ENCODE measurements at regions of chr6 and their contacts with region 1.

Region 1: DNA sequence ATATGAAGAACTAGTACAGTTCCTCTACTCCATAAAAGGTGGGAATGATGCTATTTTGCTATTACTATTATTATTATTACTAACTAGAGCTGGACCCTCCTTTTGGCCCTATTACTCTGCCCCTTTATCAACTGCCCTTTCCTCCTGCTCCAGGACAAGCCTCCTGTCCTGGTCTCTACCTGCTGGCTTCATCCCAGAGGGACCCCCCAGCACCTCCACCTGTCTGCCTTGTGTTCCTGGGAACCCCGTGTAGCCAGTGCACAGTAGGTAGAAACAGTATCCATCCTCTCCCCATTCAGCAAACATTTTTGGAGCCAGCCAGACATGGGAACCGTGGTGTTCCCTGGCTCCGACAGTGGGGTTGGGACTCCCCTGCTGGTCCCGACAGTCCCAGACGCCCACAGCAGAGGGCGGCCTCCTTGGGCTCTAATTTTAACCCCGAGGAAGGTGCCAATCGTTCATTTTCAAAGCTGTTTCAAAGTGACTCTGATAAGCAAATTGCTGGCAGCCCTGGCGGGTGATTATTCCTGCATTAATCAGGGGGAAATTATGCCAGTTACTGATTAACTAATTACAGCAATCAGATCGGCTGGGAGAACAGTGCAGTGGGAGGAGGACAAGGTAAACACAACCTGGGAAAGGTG is 44.2 kb upstream of the MDGA1 start:
- DNase-seq: no peak
- H3K4me3 ChIP-seq: no peak overlapping the region
- H3K27ac ChIP-seq: no peak overlapping the region
- H3K27me3 ChIP-seq: peaks cover 54% of the 10 kb centered on the region
- CTCF ChIP-seq: 0 out of 2 replicates have a peak, but pooled peaks have one; percentile 6

Region 2: DNA sequence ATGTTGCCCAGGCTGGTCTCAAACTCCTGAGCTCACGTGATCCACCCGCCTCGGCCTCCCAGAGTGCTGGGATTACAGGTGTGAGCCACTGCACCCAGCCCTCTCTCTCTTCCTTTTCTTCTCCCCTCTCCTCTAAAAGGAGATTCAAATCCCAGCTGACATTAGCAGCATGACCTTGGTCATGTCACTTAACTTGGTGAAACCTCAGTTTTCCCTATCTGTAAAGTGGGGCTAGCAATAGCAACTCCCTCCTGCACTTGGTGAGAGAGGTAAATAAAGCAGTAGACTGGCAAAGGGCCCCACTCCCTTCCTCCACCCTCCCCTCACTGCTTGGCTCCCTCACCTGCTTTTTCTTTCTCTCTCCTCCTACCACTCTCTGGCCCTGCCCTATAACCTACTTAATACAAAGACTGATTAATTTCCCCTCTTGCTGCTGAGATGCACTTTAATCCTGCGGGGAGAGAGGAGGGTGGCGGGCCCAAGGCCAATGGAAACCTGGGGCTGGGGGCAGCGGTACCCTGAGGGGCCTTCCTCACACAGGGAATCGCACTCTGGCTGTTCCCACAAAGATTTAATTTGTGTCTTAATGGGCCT is 23.4 kb after region 1 on chr6:
- CTCF ChIA-PET with region 1: no interaction called
- POLR2A ChIA-PET with region 1: no interaction called
- DNase-seq: no peak
- H3K4me3 ChIP-seq: no peak overlapping the region
- H3K27ac ChIP-seq: no peak overlapping the region
- H3K27me3 ChIP-seq: peaks cover 39% of the 10 kb centered on the region
- CTCF ChIP-seq: no peak

Region 3: GRCh38 chr6:38155621-38156204 is 413.8 kb after region 1 on chr6:
- CTCF ChIA-PET with region 1: interaction called, 10 read pairs
- POLR2A ChIA-PET with region 1: no interaction called
- DNase-seq: peak; percentile 13
- H3K4me3 ChIP-seq: no peak overlapping the region
- H3K27ac ChIP-seq: peak overlapping the region; percentile 83
- H3K27me3 ChIP-seq: no peaks in the 10 kb centered on the region
- CTCF ChIP-seq: no peak

Measured in AG04450 (cell line).